Heart left ventricle (tissue), 16 donors: ENCODE measurements at regions of chr16 and their contacts with region 1.

Region 1: GRCh38 chr16:3059000-3059722 is 6.3 kb upstream of the IL32 start:
- DNase-seq: peak; percentile 91 to 96 (median 94)
- ATAC-seq: peak; percentile 78 to 95 (median 94)
- H3K4me3 ChIP-seq: peak overlapping the region; percentile 77 to 99 (median 94)
- H3K27ac ChIP-seq: peak overlapping the region; percentile 44 to 94 (median 88)
- H3K4me1 ChIP-seq: peaks cover 0 to 63% (median 19%) of the 10 kb centered on the region in 12 donors
- H3K27me3 ChIP-seq: no peaks in the 10 kb centered on the region
- CTCF ChIP-seq: peak; percentile 85 to 99 (median 96)
- POLR2A ChIP-seq: peak in 1 of 2 donors; percentile 58

Region 2: GRCh38 chr16:2858265-2859025 is 200.7 kb before region 1 on chr16:
- intact Hi-C with region 1: no loop called
- DNase-seq: no peak
- ATAC-seq: peak in 1 of 4 donors; percentile 36
- H3K4me3 ChIP-seq: no peak overlapping the region
- H3K27ac ChIP-seq: no peak overlapping the region
- H3K4me1 ChIP-seq: peaks cover 0 to 8% (median 0%) of the 10 kb centered on the region in 12 donors
- H3K27me3 ChIP-seq: peaks cover 13 to 55% (median 28%) of the 10 kb centered on the region in 9 donors
- CTCF ChIP-seq: no peak
- POLR2A ChIP-seq: no peak

Region 3: DNA sequence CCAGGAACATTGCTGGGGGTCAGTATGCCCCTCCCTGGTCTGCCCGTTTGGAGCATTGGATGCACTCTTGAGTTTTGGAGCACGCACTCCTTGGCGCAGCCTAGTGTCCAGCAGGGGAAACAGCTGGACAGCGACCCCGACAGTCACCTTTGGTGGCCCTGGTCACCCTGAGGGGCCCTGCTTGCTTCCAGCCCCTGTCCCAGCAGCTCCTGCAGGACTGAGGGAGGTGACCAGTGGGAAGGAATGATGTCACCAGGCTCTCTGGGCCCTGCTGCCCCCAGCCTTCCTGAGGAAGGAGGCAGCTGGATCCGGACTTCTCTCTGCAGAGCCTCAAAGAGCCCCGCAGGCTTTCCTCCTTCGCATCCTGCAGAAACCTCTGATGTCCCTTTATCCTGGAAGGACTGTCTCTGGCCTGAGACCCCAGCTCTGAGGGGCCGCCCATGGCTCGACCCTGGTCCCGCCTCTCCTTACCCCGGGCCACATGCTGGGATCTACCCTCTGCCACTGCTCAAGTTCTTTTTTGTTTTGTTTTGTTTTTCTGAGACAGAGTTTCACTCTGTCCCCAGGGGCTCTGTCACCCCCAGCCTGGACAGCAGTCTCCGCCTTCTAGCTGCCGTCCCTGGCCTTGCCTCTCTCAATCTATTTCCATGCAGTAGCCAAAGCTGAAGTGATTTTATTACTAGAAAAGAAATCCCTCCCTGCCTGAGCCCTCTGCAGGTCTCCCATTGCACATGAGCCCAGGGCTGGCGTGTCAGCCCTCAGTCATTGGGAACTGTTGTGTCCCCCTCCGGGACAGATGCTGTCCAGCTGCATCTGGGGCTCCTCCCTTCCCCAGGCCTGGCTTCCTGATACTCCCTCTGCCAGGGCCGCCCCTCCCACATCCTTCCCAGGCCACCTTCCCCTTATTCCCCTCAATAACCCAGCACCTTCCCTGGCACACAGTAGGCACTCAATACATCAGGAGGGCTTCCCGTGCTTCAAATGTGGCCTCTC is 28.4 kb after region 1 on chr16:
- intact Hi-C with region 1: loop called in 2 of 10 experiments (anchors 2 kb)
- DNase-seq: peak; percentile 59 to 84 (median 66)
- ATAC-seq: peak; percentile 72 to 90 (median 74)
- H3K4me3 ChIP-seq: peak overlapping the region in 11 of 12 donors; percentile 14 to 63 (median 51)
- H3K27ac ChIP-seq: peak overlapping the region; percentile 59 to 94 (median 86)
- H3K4me1 ChIP-seq: peaks cover 4 to 43% (median 19%) of the 10 kb centered on the region in 12 donors
- H3K27me3 ChIP-seq: peaks cover 0 to 7% (median 0%) of the 10 kb centered on the region in 9 donors
- CTCF ChIP-seq: peak in 8 of 12 donors; percentile 11 to 45 (median 28)
- POLR2A ChIP-seq: peak in 1 of 2 donors; percentile 13

Region 4: DNA sequence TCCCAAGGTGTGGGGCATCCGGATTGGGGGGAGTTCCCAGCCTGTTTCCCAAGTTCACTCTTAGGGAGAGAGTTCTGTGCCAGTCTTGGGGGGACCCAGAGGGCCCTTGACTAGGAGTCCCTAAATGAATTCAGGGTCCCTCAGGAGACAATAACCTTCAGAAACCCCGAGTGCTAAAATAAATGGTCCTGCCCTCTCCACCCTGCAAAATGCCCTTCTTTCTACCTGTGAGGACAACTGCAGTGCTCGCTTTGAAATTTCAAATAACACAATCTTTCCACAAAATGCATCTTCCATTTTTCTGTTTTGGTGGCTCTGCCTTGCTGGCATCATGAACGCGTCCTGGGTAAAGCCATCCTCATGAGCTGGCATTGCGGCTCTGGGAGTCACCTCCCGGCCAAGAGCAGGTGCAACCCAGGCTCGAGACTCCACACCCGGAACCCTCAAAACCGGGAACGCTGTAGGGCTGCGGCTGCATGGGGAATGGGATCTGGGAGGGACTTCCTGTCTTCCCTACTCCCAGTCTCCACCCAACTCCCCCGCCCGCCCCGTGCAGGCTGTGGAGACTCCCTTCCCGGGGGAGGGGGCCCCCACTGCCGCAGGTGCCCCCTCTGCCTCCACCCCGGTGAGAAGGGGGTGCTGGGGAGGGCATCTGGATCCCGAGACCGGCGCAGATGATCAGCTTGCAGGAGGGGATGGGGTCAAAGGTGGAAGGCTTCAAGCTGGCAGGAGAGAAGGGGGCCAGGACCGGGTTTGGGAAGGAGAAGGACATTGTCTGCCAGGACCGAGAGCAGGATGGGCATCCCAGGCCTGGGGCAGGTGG is 53.1 kb after region 1 on chr16 and contains the start of gene ZNF205:
- intact Hi-C with region 1: loop called in 1 of 10 experiments (anchors 5 kb)
- DNase-seq: peak; percentile 84 to 87 (median 85)
- ATAC-seq: peak; percentile 81 to 97 (median 94)
- H3K4me3 ChIP-seq: peak within 1 kb of the TSS; percentile 40 to 97 (median 85)
- H3K27ac ChIP-seq: peak within 1 kb of the TSS; percentile 12 to 89 (median 76)
- H3K4me1 ChIP-seq: peaks cover 0 to 37% (median 26%) of the 10 kb centered on the region in 12 donors
- H3K27me3 ChIP-seq: peaks cover 0 to 3% (median 0%) of the 10 kb centered on the region in 9 donors
- CTCF ChIP-seq: no peak
- POLR2A ChIP-seq: peak in 1 of 2 donors; percentile 16
- total RNA-seq, gene ZNF205: 7.4 to 19.8 (median 8.1) TPM

Region 5: GRCh38 chr16:3129137-3130131 is 70.3 kb after region 1 on chr16:
- intact Hi-C with region 1: loop called (anchors 1 to 5 kb)
- DNase-seq: peak; percentile 77 to 84 (median 80)
- ATAC-seq: peak; percentile 76 to 83 (median 78)
- H3K4me3 ChIP-seq: peak overlapping the region; percentile 11 to 68 (median 54)
- H3K27ac ChIP-seq: peak overlapping the region; percentile 8 to 87 (median 76)
- H3K4me1 ChIP-seq: peaks cover 3 to 59% (median 34%) of the 10 kb centered on the region in 12 donors
- H3K27me3 ChIP-seq: no peaks in the 10 kb centered on the region
- CTCF ChIP-seq: peak in 11 of 12 donors; percentile 88 to 97 (median 92)
- POLR2A ChIP-seq: no peak

Region 6: GRCh38 chr16:3165111-3165822 is 106.1 kb after region 1 on chr16:
- intact Hi-C with region 1: loop called in 6 of 10 experiments (anchors 1 to 10 kb)
- DNase-seq: peak in 1 of 5 donors; percentile 19
- ATAC-seq: no peak
- H3K4me3 ChIP-seq: peak overlapping the region in 8 of 12 donors; percentile 19 to 43 (median 38)
- H3K27ac ChIP-seq: peak overlapping the region in 3 of 12 donors; percentile 5 to 66 (median 46)
- H3K4me1 ChIP-seq: peaks cover 0 to 13% (median 4%) of the 10 kb centered on the region in 12 donors
- H3K27me3 ChIP-seq: peaks cover 6 to 29% (median 18%) of the 10 kb centered on the region in 9 donors
- CTCF ChIP-seq: no peak
- POLR2A ChIP-seq: no peak